ENCODE measurements at regions of chr3 and their contacts with region 1.

Region 1: DNA sequence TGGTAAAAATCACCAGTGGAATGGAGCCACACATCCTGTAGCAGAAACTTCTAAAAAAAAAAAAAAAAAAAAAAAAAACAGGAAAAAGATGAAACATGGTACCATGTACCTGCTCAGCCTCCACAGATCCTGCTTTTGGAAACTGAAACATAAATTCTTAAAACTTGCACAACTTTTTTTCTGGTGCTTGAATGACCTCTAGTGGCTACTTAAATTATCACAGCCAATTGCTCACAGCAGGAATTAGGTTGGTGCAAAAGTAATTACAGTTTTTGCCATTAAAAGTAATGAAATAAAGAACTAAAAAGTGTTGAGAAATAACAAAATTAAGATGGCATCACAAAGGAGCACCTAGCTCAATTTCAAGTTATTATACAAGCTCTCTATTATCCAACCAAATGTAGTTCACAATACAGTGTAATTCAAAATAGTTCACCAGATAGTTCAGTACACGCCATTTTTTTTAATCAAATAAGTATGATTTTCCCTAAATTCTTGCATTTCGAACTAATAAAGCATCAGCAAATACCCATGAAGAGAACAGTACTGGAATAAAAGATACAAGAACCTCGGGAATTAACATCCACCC is 80.6 kb downstream of the ULK4 start:
- DNase-seq: peak; percentile 10 to 41 (median 37)
- H3K4me3 ChIP-seq: no peak overlapping the region
- H3K4me3 Mint-ChIP-seq: no peak overlapping the region
- H3K27ac ChIP-seq: no peak overlapping the region
- H3K27ac Mint-ChIP-seq: no peak overlapping the region
- H3K4me1 ChIP-seq: no peaks in the 10 kb centered on the region
- H3K4me1 Mint-ChIP-seq: no peaks in the 10 kb centered on the region
- H3K27me3 ChIP-seq: no peaks in the 10 kb centered on the region
- H3K27me3 Mint-ChIP-seq: no peaks in the 10 kb centered on the region
- CTCF ChIP-seq: peak; percentile 77

Region 2: GRCh38 chr3:40329071-40329470 is 1552.3 kb before region 1 on chr3:
- intact Hi-C with region 1: loop called (anchors 5 kb)
- DNase-seq: no peak
- H3K4me3 ChIP-seq: no peak overlapping the region
- H3K4me3 Mint-ChIP-seq: no peak overlapping the region
- H3K27ac ChIP-seq: no peak overlapping the region
- H3K27ac Mint-ChIP-seq: no peak overlapping the region
- H3K4me1 ChIP-seq: no peaks in the 10 kb centered on the region
- H3K4me1 Mint-ChIP-seq: no peaks in the 10 kb centered on the region
- H3K27me3 ChIP-seq: no peaks in the 10 kb centered on the region
- H3K27me3 Mint-ChIP-seq: peaks cover 0 to 4% (median 2%) of the 10 kb centered on the region in 3 donors
- CTCF ChIP-seq: no peak

Region 3: DNA sequence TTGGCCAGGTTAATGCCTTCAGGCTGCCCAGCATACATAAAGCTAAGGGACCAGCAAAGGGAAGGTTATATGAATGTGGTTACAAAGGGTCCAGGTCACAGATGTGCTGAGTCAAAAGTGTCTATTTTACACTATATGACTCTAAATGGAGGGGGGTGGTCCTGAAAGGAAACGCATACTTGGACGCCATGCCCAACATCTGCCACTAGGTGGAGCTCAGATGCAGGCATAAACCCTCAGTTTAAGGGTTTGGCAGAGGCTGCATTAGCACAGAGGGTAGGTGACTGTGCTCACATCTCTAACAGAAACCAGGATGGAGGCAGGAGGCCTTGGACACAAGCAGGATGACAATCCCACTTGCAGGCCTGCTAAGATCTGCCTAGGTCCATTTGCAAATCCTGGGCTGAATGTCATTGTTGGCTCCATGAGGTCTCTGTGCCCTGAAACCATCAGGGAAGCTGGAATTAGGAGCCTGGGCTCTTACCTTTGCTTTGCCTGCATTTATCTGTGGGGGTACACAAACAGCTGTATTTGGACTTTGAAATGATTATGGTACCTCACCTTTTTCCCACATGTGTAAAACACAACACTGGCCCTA is 1300.7 kb before region 1 on chr3:
- intact Hi-C with region 1: loop called (anchors 2 to 5 kb)
- DNase-seq: peak; percentile 46 to 60 (median 56)
- H3K4me3 ChIP-seq: no peak overlapping the region
- H3K4me3 Mint-ChIP-seq: no peak overlapping the region
- H3K27ac ChIP-seq: no peak overlapping the region
- H3K27ac Mint-ChIP-seq: no peak overlapping the region
- H3K4me1 ChIP-seq: no peaks in the 10 kb centered on the region
- H3K4me1 Mint-ChIP-seq: peaks cover 3% of the 10 kb centered on the region
- H3K27me3 ChIP-seq: no peaks in the 10 kb centered on the region
- H3K27me3 Mint-ChIP-seq: peaks cover 2 to 6% (median 3%) of the 10 kb centered on the region in 3 donors
- CTCF ChIP-seq: peak; percentile 98

Region 4: GRCh38 chr3:41846850-41847249 is 34.5 kb before region 1 on chr3:
- intact Hi-C with region 1: no loop called
- DNase-seq: no peak
- H3K4me3 ChIP-seq: no peak overlapping the region
- H3K4me3 Mint-ChIP-seq: no peak overlapping the region
- H3K27ac ChIP-seq: no peak overlapping the region
- H3K27ac Mint-ChIP-seq: no peak overlapping the region
- H3K4me1 ChIP-seq: no peaks in the 10 kb centered on the region
- H3K4me1 Mint-ChIP-seq: no peaks in the 10 kb centered on the region
- H3K27me3 ChIP-seq: no peaks in the 10 kb centered on the region
- H3K27me3 Mint-ChIP-seq: peaks cover 0 to 2% (median 0%) of the 10 kb centered on the region in 3 donors
- CTCF ChIP-seq: no peak

Region 5: GRCh38 chr3:42473083-42473932 is 592.0 kb after region 1 on chr3:
- intact Hi-C with region 1: no loop called
- DNase-seq: no peak
- H3K4me3 ChIP-seq: no peak overlapping the region
- H3K4me3 Mint-ChIP-seq: peak overlapping the region in 1 of 2 donors; percentile 50
- H3K27ac ChIP-seq: no peak overlapping the region
- H3K27ac Mint-ChIP-seq: peak overlapping the region in 1 of 7 donors; percentile 51
- H3K4me1 ChIP-seq: peaks cover 21 to 23% of the 10 kb centered on the region in 2 donors
- H3K4me1 Mint-ChIP-seq: peaks cover 16% of the 10 kb centered on the region
- H3K27me3 ChIP-seq: no peaks in the 10 kb centered on the region
- H3K27me3 Mint-ChIP-seq: peaks cover 8 to 21% (median 18%) of the 10 kb centered on the region in 3 donors
- CTCF ChIP-seq: no peak

Measured in CD14-positive monocyte (primary cell).